ENCODE measurements at regions of chr22 and their contacts with region 1.

Region 1: GRCh38 chr22:29194184-29194583 is 11.5 kb upstream of the EMID1 start:
- DNase-seq: no peak
- ATAC-seq: no peak
- H3K4me3 ChIP-seq: no peak overlapping the region
- H3K27ac ChIP-seq: no peak overlapping the region
- H3K4me1 ChIP-seq: no peaks in the 10 kb centered on the region
- H3K27me3 ChIP-seq: no peaks in the 10 kb centered on the region
- CTCF ChIP-seq: no peak

Region 2: DNA sequence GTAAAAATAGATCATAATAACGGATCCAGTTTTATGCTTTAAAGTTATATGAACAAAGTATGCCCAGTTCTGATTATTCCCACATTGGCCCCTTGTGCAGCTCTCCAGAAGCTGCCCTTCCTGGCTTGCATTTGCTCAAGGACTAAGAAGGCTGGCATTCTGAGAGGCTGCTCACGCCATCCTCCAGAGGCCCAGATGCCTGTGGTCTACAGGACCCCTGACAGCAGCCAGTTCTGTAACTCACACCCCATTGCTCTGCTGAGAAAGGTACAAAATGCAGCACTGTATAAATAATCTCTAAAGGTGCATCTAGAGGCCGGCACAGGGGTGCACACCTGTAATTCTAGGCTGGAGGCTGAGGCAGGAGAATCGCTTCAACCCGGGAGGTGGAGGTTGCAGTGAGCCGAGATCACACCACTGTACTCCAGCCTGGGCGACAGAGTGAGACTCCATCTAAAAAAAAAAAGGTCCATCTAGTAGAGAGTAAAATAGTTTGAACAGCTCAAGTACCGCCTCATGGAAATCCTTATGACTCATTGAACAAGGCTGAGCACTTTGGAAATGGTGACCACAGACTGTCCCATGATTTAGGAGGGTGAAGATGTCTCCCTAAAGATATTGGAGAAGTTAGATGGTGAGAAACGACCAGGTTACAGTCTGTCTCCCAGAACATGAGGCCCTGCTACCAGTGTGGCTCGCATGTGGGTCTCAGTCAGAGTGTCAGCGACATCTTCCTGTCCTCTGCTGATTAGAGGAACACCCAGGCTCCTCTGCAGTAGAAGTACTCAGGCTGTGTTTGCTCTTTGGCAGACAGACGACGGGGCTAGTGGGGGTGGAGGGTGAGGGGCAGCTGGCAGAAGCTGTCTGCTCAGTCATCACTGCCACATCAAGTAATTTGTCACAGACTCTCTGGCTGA is 65.0 kb before region 1 on chr22:
- intact Hi-C with region 1: no loop called
- DNase-seq: peak in 1 of 2 donors; percentile 61
- ATAC-seq: peak; percentile 71 to 92 (median 80)
- H3K4me3 ChIP-seq: no peak overlapping the region
- H3K27ac ChIP-seq: peak overlapping the region; percentile 27
- H3K4me1 ChIP-seq: peaks cover 6% of the 10 kb centered on the region
- H3K27me3 ChIP-seq: no peaks in the 10 kb centered on the region
- CTCF ChIP-seq: no peak

Region 3: DNA sequence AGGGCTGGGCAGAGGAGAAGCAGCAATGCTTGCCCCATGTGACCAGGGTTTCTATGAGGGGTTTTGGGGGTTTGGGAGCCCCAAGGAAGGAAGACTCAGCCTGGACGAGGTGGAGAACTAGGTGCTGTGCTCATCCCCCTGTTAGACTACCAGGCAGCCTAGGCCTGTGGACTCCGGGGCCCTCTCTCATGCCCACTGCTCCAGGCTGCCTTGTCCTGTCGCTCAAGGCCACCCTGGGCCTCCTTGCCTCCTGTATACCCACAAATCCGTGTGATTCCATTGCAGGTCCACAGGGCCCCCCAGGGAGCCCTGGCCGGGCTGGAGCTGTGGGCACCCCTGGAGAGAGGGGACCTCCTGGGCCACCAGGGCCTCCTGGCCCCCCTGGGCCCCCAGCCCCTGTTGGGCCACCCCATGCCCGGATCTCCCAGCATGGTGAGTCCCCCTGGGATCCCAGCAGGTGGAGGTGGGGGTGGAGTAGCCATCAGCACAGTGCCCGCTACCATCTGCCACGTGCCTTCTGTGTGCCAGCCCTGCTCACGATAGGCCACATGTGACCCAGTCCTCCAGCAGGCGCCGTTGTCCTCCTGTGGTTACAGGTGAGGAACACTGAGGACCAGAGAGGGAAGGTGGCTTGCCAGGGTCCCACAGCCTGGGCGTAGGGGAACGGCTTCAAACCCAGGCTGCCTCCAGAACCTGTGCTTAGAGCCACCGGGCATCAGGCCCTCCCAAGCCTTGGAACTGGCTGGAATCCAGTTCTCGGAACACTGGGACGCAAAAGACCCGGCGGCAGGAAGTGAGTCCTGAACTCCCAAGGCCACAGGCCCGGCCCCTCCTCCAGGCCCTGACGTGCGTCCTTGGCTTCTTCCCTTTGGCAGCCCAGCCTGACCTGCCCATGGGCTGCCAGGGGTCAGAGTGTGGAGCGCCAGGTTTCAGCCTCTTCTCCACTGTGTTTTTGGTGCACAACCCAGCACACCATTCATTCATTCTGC is 38.1 kb after region 1 on chr22:
- intact Hi-C with region 1: loop called in 1 of 2 experiments (anchors 5 kb)
- DNase-seq: peak; percentile 47 to 69
- ATAC-seq: peak in 2 of 4 donors; percentile 5 to 49
- H3K4me3 ChIP-seq: no peak overlapping the region
- H3K27ac ChIP-seq: no peak overlapping the region
- H3K4me1 ChIP-seq: no peaks in the 10 kb centered on the region
- H3K27me3 ChIP-seq: no peaks in the 10 kb centered on the region
- CTCF ChIP-seq: no peak

Measured in psoas muscle (tissue), 8 donors.